Activated CD8-positive, alpha-beta T cell treated with anti-CD3 and anti-CD28 coated beads for 36 hours (primary cell): ENCODE measurements at regions of chr10 and their contacts with region 1.

Region 1: GRCh38 chr10:132571650-132572535 is 34.3 kb downstream of the INPP5A start:
- DNase-seq: peak; percentile 92
- ATAC-seq: peak; percentile 87
- H3K4me3 Mint-ChIP-seq: peak overlapping the region; percentile 28
- H3K27ac Mint-ChIP-seq: peak overlapping the region; percentile 69
- H3K4me1 Mint-ChIP-seq: peaks cover 28% of the 10 kb centered on the region
- H3K27me3 Mint-ChIP-seq: no peaks in the 10 kb centered on the region
- CTCF ChIP-seq: no peak

Region 2: DNA sequence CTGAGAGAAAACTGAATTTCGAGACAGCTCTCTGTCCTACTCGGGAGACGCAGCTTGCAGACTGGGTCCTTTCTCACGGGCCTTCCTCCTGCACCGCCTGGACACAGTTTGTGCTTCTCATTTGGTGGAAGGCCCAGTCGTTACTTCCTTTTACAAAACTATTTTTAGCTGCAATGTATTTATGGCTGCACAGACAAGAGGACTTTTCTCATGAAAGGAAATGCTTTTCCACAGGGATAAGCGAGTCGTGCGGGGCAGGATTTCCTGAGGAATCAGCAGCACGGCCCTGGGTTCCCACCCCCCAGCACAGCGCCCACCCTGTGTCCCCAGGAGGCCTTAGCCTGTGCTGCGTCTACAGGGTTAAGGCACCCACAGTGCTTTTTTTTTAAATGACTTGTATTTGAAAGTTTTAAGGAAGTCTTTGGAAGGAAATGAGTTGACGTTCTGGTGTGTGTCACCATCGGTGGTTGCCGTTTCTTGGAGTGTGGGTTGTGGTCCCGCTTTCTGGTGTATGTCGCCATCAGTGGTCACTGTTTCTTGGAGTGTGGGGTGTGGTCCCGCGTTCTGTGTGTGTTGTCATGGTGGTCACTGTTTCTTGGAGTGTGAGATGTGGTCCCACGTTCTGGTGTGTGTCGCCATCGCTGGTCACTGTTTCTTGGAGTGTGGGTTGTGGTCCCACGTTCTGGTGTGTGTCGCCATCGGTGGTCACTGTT is 16.6 kb after region 1 on chr10:
- CTCF ChIA-PET with region 1: interaction called, 3 read pairs
- POLR2A ChIA-PET with region 1: interaction called, 4 read pairs
- intact Hi-C with region 1: loop called (anchors 2 kb)
- DNase-seq: peak; percentile 79
- ATAC-seq: peak; percentile 75
- H3K4me3 Mint-ChIP-seq: peak overlapping the region; percentile 40
- H3K27ac Mint-ChIP-seq: peak overlapping the region; percentile 67
- H3K4me1 Mint-ChIP-seq: peaks cover 42% of the 10 kb centered on the region
- H3K27me3 Mint-ChIP-seq: no peaks in the 10 kb centered on the region
- CTCF ChIP-seq: no peak